K562 (cell line): ENCODE measurements at regions of chr2 and their contacts with region 1.

Region 1: DNA sequence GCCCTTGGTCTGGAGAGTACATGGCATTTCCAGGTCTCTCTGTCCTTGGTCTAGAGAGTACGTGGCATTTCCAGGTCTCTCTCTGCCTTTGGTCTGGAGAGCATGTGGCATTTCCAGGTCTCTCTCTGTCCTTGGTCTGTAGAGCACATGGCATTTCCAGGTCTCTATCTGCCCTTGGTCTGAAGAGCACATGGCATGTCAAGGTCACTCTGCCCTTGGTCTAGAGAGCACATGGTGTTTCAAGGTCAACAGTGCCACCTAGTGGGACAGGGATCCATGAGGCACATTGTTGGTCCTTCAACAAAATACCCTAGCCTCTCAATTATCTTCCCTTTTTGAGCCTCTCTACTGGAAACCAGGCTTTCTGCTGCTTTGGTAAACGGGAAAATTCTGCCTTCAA is 250.2 kb downstream of the OTX1 start:
- DNase-seq: peak in 3 of 4 experiments; percentile 10 to 53 (median 12)
- ATAC-seq: no peak
- H3K4me3 ChIP-seq: no peak overlapping the region
- H3K27ac ChIP-seq: no peak overlapping the region; the same call in 2 of the 3 replicates
- H3K4me1 ChIP-seq: no peaks in the 10 kb centered on the region
- H3K27me3 ChIP-seq: no peaks in the 10 kb centered on the region
- CTCF ChIP-seq: peak in 2 of 3 experiments; percentile 26 to 29; a peak in 2 of 6 replicates
- EP300 ChIP-seq: no peak
- POLR2A ChIP-seq: no peak
- RAD21 ChIP-seq: peak in 1 of 2 experiments; percentile 52; a peak in 2 of 4 replicates

Region 2: DNA sequence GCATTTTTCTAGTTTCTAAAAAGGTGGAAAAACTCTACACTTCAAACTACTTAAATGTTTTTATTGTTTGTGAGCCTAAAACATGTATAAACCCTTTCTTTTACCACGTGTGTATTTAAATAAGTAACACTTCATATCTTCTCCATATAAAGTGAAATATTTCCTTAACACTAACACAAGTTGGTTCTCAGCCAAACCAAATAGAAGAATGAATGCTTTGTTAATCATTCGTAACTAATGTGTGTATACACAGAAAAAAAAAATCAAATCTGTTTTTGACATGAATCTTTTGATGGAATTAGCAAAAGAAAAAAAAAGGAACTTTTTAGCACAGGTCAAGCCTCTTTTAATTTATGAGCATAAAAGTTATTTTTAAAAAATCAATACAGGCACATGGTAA is 506.0 kb before region 1 on chr2:
- CTCF ChIA-PET with region 1: no interaction called
- POLR2A ChIA-PET with region 1: no interaction called
- in situ Hi-C with region 1: no loop called
- intact Hi-C with region 1: loop called (anchors 10 kb)
- DNase-seq: no peak
- ATAC-seq: no peak
- H3K4me3 ChIP-seq: no peak overlapping the region
- H3K27ac ChIP-seq: no peak overlapping the region
- H3K4me1 ChIP-seq: no peaks in the 10 kb centered on the region
- H3K27me3 ChIP-seq: no peaks in the 10 kb centered on the region
- CTCF ChIP-seq: no peak
- EP300 ChIP-seq: no peak
- POLR2A ChIP-seq: no peak
- RAD21 ChIP-seq: no peak